ENCODE measurements at regions of chr12 and their contacts with region 1.

Region 1: GRCh38 chr12:40107098-40107802 is 1.4 kb upstream of the SLC2A13 start:
- DNase-seq: peak; percentile 87 to 91
- ATAC-seq: peak in 7 of 8 donors; percentile 21 to 80 (median 68)
- H3K4me3 ChIP-seq: peak overlapping the region in 9 of 10 donors; percentile 5 to 99 (median 41)
- H3K27ac ChIP-seq: peak overlapping the region in 2 of 10 donors; percentile 33 to 93
- H3K4me1 ChIP-seq: peaks cover 0 to 38% (median 31%) of the 10 kb centered on the region in 9 donors
- H3K27me3 ChIP-seq: peaks cover 0 to 4% (median 0%) of the 10 kb centered on the region in 7 donors
- CTCF ChIP-seq: peak; percentile 88 to 97 (median 94)

Region 2: GRCh38 chr12:39764944-39765560 is 342.2 kb before region 1 on chr12:
- intact Hi-C with region 1: loop called (anchors 2 to 10 kb)
- DNase-seq: no peak
- ATAC-seq: peak in 1 of 8 donors; percentile 46
- H3K4me3 ChIP-seq: no peak overlapping the region
- H3K27ac ChIP-seq: no peak overlapping the region
- H3K4me1 ChIP-seq: peaks cover 0 to 5% (median 0%) of the 10 kb centered on the region in 9 donors
- H3K27me3 ChIP-seq: no peaks in the 10 kb centered on the region
- CTCF ChIP-seq: peak; percentile 35 to 83 (median 71)

Region 3: DNA sequence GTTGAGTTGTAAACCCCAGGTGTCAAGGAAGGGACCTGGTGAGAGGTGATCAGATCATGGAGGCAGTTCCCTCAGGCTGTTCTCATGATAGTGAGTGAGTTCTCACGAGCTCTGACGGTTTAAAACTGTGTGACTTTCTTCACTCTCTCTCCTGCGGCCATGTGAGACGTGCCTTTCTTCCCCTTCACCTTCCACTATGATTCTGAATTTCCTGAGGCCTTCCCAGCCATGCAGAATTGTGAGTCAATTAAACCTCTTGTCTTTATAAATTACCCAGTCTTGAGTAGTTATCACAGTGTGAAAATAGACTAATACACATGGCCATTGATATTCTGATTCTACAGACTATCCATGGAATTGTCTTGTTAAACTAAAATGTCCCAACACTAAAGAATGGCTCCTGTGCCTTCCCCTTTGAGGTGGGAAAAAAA is 87.0 kb before region 1 on chr12:
- intact Hi-C with region 1: loop called in 2 of 10 experiments (anchors 5 to 10 kb)
- DNase-seq: no peak
- ATAC-seq: no peak
- H3K4me3 ChIP-seq: no peak overlapping the region
- H3K27ac ChIP-seq: no peak overlapping the region
- H3K4me1 ChIP-seq: peaks cover 0 to 19% (median 7%) of the 10 kb centered on the region in 9 donors
- H3K27me3 ChIP-seq: no peaks in the 10 kb centered on the region
- CTCF ChIP-seq: no peak

Region 4: DNA sequence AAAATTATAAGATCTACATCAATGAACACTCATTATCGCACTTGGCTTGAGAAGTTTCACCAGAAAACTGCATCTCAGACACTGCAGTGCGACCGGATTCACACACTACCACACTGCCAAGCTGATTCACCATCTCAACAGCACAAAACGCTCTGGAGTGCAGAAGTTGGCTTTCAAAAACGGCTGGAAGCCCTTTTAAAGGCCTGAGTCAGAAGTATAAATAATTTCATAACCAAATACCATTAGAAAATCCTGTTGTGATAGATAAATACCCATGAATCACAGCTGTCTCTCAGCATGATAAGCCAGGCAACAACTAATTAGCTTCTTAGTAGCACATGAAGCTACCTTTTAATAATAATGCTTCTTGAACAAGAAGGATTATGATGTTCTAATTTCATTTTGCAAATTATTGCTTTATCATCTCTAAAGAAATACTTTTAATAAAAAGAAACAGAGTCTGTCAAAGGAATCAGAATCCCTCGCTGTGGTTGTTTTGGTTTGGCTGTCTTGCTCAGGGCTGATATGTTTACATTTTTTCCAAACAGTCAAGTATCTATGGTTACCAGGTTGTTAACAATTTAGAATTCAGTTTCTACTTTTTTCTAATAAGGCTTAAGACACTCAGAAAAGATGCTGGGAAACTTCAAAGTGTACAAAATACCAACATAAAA is 52.6 kb before region 1 on chr12:
- intact Hi-C with region 1: loop called in 1 of 10 experiments (anchors 10 kb)
- DNase-seq: peak in 1 of 2 donors; percentile 20
- ATAC-seq: peak; percentile 66 to 93 (median 74)
- H3K4me3 ChIP-seq: peak overlapping the region in 6 of 10 donors; percentile 1 to 28 (median 6)
- H3K27ac ChIP-seq: peak overlapping the region in 9 of 10 donors; percentile 24 to 73 (median 69)
- H3K4me1 ChIP-seq: peaks cover 0 to 30% (median 10%) of the 10 kb centered on the region in 9 donors
- H3K27me3 ChIP-seq: no peaks in the 10 kb centered on the region
- CTCF ChIP-seq: no peak

Region 5: GRCh38 chr12:40192704-40193255 is 85.5 kb after region 1 on chr12:
- intact Hi-C with region 1: no loop called
- DNase-seq: no peak
- ATAC-seq: no peak
- H3K4me3 ChIP-seq: no peak overlapping the region
- H3K27ac ChIP-seq: no peak overlapping the region
- H3K4me1 ChIP-seq: peaks cover 0 to 12% (median 0%) of the 10 kb centered on the region in 9 donors
- H3K27me3 ChIP-seq: no peaks in the 10 kb centered on the region
- CTCF ChIP-seq: no peak

Measured in heart right ventricle (tissue), 16 donors.